ENCODE measurements at regions of chr2 and their contacts with region 1.

Region 1: DNA sequence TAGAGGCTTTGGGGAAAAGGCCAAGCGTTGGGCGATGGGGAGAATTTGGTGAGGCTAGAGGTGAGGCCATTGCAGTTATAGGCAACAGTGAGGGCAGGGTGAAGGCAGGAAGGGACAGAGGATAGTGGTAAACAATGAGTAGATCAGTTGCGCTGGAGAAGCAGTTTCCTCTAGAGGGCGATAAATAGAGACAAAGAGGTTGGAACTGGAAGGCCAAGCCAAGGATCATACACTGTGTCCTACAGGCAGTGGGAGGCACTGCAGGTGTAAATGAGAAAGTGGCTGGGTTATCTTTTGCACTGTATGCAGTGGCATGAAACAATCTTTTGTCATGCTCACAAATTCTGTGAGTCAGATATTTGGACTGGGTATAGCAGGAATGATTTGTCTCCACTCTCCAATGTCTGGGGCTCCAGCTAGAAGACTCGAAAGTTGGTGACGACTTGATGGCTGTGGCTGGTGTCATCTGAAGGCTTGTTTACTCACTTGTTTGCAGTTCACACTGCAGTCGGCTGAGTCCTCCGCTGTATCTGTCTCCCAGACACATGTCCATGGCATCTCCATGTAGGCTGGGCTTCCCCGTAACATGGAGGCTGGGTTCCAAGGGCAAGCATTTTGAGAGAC is 82.1 kb downstream of the TNP1 start:
- DNase-seq: no peak
- ATAC-seq: no peak
- H3K4me3 ChIP-seq: no peak overlapping the region
- H3K27ac ChIP-seq: no peak overlapping the region
- H3K4me1 ChIP-seq: peaks cover 6 to 39% (median 24%) of the 10 kb centered on the region in 12 donors
- H3K27me3 ChIP-seq: no peaks in the 10 kb centered on the region
- CTCF ChIP-seq: peak; percentile 24 to 58 (median 42)
- POLR2A ChIP-seq: no peak

Region 2: GRCh38 chr2:216849987-216850386 is 72.2 kb after region 1 on chr2:
- intact Hi-C with region 1: loop called in 1 of 10 experiments (anchors 10 kb)
- DNase-seq: peak; percentile 66 to 82 (median 81)
- ATAC-seq: peak; percentile 57 to 93 (median 90)
- H3K4me3 ChIP-seq: no peak overlapping the region
- H3K27ac ChIP-seq: peak overlapping the region in 3 of 12 donors; percentile 2 to 46 (median 4)
- H3K4me1 ChIP-seq: peaks cover 0 to 33% (median 13%) of the 10 kb centered on the region in 12 donors
- H3K27me3 ChIP-seq: no peaks in the 10 kb centered on the region
- CTCF ChIP-seq: no peak
- POLR2A ChIP-seq: no peak

Region 3: GRCh38 chr2:217521820-217522219 is 744.1 kb after region 1 on chr2:
- intact Hi-C with region 1: loop called in 1 of 10 experiments (anchors 10 kb)
- DNase-seq: no peak
- ATAC-seq: peak in 1 of 4 donors; percentile 16
- H3K4me3 ChIP-seq: no peak overlapping the region
- H3K27ac ChIP-seq: peak overlapping the region in 1 of 12 donors; percentile 39
- H3K4me1 ChIP-seq: peaks cover 0 to 15% (median 4%) of the 10 kb centered on the region in 12 donors
- H3K27me3 ChIP-seq: no peaks in the 10 kb centered on the region
- CTCF ChIP-seq: no peak
- POLR2A ChIP-seq: no peak

Measured in heart left ventricle (tissue), 16 donors.